PC-9 (cell line): ENCODE measurements at regions of chr1 and their contacts with region 1.

Region 1: GRCh38 chr1:181105134-181106021 is 16.9 kb downstream of the IER5 start:
- DNase-seq: peak; percentile 69 to 94
- H3K4me3 ChIP-seq: peak overlapping the region; percentile 64
- H3K27ac ChIP-seq: peak overlapping the region; percentile 96
- H3K4me1 ChIP-seq: peaks cover 70% of the 10 kb centered on the region
- H3K27me3 ChIP-seq: no peaks in the 10 kb centered on the region
- CTCF ChIP-seq: no peak

Region 2: GRCh38 chr1:179996099-179996498 is 1109.3 kb before region 1 on chr1:
- CTCF ChIA-PET with region 1: no interaction called
- POLR2A ChIA-PET with region 1: no interaction called
- intact Hi-C with region 1: no loop called
- DNase-seq: no peak
- H3K4me3 ChIP-seq: no peak overlapping the region
- H3K27ac ChIP-seq: no peak overlapping the region
- H3K4me1 ChIP-seq: no peaks in the 10 kb centered on the region
- H3K27me3 ChIP-seq: no peaks in the 10 kb centered on the region
- CTCF ChIP-seq: no peak

Region 3: DNA sequence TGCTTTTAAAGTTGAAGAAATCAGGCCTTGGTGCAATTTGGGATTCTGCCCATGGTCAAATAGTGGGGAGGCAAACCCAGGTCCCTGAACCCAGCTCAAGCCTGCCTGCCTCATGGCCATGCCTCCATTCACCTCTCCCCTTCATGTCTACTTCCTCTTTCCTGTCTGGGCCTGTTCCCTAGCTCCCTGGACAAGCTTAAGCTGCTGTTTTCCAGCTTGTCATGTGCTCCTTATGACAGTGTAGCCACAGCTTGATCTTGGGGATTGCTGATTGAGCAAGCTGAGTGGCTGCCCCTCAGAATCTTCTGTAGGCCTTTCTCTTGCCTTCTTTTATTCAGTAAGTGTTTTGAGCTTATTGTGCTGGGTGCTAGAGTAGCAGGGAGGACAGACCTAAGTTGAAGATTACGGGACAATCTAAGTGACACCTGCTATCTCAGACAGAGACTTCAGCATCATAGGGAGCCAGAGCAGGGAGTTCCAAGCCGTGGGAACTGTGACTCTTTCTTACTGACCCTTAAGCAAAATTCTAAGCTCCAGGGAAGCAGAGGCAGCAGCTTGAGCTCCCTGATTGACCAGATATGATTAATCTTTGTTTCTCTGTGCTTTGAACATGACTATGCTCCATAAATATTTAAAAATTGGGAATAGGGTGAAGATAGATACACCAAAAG is 72.1 kb before region 1 on chr1:
- CTCF ChIA-PET with region 1: interaction called, 9 read pairs
- POLR2A ChIA-PET with region 1: interaction called, 18 read pairs
- intact Hi-C with region 1: no loop called
- DNase-seq: peak in 1 of 2 experiments; percentile 30
- H3K4me3 ChIP-seq: peak overlapping the region; percentile 64
- H3K27ac ChIP-seq: peak overlapping the region; percentile 70
- H3K4me1 ChIP-seq: peaks cover 17% of the 10 kb centered on the region
- H3K27me3 ChIP-seq: no peaks in the 10 kb centered on the region
- CTCF ChIP-seq: no peak

Region 4: DNA sequence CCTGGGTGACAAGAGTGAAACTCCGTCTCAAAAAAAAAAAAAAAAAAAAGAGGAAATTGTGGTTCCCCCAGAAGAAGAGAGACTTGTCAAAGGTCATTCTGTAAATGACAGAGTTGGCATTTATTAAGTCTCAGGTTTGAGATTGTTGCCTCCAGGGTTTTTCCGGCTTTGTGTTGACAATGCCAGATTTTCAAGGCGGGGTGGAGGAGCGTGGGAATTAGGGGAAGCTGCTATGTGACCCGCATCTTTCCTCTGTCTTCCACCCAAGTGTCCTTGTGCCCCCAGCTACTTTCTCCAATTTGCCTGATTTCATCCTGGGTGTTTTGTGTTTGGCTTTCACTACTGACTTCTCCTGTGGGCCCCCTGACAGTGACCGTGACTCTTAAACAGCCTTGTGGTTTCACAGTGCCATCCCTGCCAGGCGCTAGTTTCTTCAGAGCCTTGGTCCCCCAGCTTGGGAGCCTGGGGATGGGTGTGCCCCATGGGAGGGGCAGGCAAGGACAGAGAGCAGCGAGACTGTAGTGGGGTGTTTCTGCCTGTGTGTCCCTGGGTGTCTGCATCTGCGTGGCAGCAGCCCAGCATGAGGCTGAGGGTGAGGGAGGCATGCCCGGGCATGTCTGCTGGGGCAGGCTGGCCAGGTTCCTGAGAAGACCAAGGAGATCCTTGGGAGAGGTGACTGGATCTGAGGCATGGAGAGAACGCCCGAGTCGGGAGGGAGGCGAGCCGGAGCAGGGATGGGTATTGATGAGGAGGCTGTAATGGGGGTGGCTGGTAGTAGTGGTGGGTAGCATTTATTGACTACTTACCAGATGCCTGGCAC is 29.4 kb after region 1 on chr1:
- CTCF ChIA-PET with region 1: interaction called, 4 read pairs
- POLR2A ChIA-PET with region 1: interaction called, 15 read pairs
- intact Hi-C with region 1: no loop called
- DNase-seq: peak; percentile 84 to 92
- H3K4me3 ChIP-seq: peak overlapping the region; percentile 26; the same call in 1 of the 2 replicates
- H3K27ac ChIP-seq: peak overlapping the region; percentile 92
- H3K4me1 ChIP-seq: peaks cover 71% of the 10 kb centered on the region
- H3K27me3 ChIP-seq: no peaks in the 10 kb centered on the region
- CTCF ChIP-seq: no peak